ENCODE measurements at regions of chr6 and their contacts with region 1.

Region 1: DNA sequence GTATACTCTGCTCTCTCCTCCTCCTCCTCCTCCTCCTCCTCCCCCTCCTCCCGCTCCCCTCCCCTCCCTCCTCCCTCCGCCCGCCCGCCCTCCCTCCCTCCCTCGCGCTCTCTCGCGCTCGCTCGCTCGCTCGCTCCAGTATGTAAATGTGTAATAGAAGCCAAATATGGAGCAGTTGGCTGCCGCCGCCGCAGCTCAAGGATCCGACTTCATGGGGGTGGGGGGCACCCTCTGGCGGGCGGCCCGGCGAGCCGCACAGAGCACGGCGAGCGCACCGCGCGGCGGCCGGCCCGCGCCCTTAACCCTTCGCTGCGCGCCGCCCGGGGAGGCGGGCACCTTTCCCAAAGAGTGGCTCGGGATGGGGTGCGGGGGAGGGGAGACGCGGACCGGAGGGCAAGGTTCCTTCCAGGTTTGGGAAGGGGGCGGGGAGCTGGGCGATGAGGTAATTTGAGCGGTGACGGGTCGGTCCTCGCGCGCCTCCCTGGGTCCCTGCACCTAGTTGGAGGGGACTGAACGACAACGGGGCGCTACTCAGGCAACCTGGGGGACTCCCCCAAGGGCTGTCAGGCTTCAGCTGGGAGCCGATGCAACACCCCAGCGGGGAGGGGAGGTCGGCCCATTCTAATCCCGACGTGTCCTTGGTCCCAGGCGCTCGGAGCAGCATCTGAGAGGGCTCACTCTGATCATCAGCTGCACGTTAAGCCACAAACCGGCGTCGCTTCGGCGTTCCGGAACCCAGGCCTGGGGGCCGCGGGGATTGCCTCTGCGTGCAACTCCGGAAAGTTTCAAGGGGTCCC is 409 bp upstream of the ATXN1 start:
- DNase-seq: peak; percentile 89
- ATAC-seq: peak; percentile 47

Region 2: GRCh38 chr6:16332175-16332542 is 429.5 kb before region 1 on chr6:
- intact Hi-C with region 1: loop called (anchors 10 kb)
- DNase-seq: peak; percentile 90
- ATAC-seq: peak; percentile 85

Region 3: GRCh38 chr6:16494793-16495192 is 266.9 kb before region 1 on chr6:
- intact Hi-C with region 1: no loop called
- DNase-seq: no peak
- ATAC-seq: no peak

Region 4: DNA sequence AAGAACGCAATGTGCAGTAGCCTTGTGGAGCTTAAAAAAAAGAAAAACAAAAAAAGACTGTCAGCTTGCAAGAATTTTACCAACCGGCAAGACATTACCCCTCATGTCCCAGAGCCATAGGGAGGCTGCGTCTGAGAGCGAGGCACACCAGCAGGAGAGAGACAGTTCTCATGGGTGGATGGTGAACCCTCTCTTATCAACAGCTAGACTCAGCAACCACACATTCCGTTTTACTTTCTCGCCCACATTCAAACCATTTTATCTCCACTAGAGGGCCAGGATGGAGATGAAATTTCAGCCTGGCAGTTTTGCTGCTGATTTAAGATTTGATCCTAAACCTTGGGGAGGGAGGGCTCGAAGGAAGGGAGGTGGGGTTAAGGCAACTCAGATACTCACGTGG is 247.4 kb before region 1 on chr6:
- intact Hi-C with region 1: loop called (anchors 10 kb)
- DNase-seq: no peak
- ATAC-seq: peak; percentile 42

Region 5: DNA sequence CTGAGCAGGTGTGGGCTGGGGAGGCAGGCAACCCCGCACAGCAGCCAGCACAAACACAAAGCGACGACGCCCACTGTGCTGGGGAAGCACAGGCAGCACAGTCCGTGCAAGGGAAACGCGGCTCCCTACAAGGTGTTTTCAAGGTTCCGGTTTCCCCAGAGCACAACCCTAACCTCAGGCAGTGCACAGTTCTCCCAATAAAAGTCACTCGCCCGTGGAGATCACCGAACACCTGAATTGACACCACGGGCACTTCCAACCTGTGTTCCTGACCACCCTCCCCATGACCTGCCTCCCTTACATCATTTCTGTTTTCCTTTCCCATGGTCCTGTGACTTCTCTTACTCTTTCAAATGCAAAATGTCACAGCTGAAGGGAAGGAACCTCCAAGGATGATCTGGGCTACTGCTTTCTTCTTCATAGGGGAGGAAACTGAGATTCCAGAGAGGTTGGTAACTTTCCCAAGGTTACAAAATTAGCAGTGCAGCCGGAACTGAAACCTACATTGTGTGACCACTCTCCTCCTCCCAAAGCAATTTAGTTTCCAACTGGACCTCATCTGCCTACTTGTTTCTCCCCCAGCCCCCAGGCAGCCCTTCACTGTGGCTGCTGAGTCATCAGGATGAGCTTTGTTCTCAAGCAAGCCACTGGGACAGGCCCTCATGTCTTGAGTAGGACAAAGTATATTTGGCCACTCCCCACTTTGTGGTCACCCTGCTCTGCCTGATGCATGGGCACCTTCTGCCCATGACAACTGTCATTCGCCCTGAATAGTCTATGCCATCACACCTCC is 125.7 kb before region 1 on chr6:
- intact Hi-C with region 1: no loop called
- DNase-seq: no peak
- ATAC-seq: no peak

Measured in sciatic nerve (tissue), 2 donors.